ENCODE measurements at regions of chr21 and their contacts with region 1.

Region 1: GRCh38 chr21:39125752-39126485 is 57.3 kb downstream of the PSMG1 start:
- DNase-seq: no peak
- H3K4me3 ChIP-seq: no peak overlapping the region
- CTCF ChIP-seq: peak; percentile 74

Region 2: GRCh38 chr21:38805328-38806152 is 320.4 kb before region 1 on chr21 and contains the start of gene ETS2:
- CTCF ChIA-PET with region 1: interaction called, 16 read pairs
- POLR2A ChIA-PET with region 1: no interaction called
- DNase-seq: peak; percentile 57
- H3K4me3 ChIP-seq: peak within 1 kb of the TSS; percentile 80
- CTCF ChIP-seq: peak; percentile 22

Region 3: DNA sequence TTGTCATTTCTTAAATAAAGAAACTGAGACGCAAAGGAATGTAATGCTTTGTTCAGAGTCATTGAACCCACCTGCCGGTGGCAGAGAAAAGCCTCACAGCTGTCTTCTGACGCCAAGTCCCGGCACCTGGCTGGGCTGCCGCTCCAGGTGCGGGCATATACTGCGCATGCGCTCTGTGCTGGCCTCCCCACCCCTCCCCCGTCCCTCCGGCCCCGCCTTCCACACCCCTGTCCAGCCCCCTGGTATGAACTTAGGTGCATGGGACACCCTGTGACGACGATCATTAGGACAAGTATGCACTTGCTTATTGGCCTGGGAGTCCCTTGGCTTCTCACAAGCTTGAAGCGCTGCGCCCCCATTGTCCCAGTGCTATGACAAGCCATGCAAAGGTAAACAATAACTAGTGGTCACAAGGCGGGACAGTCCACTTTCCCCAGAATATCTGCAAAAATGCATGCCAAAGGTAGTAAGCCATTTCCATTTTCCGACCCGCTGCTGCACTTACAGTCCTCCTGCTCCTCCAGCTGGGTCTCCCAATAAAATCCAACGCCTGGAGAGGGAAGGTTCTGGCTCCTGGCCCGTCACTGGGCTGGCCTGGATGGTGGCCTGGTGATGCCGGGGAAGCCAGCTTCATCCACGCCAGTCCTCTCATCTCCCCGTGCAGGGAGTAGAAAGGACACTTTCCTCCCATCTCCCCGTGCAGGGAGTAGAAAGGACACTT is 43.1 kb before region 1 on chr21:
- CTCF ChIA-PET with region 1: no interaction called
- POLR2A ChIA-PET with region 1: no interaction called
- DNase-seq: no peak
- H3K4me3 ChIP-seq: no peak overlapping the region
- CTCF ChIP-seq: no peak

Region 4: GRCh38 chr21:39114871-39115575 is 10.9 kb before region 1 on chr21:
- CTCF ChIA-PET with region 1: interaction called, 22 read pairs
- POLR2A ChIA-PET with region 1: no interaction called
- DNase-seq: no peak
- H3K4me3 ChIP-seq: no peak overlapping the region
- CTCF ChIP-seq: no peak